ENCODE measurements at regions of chr16 and their contacts with region 1.

Region 1: DNA sequence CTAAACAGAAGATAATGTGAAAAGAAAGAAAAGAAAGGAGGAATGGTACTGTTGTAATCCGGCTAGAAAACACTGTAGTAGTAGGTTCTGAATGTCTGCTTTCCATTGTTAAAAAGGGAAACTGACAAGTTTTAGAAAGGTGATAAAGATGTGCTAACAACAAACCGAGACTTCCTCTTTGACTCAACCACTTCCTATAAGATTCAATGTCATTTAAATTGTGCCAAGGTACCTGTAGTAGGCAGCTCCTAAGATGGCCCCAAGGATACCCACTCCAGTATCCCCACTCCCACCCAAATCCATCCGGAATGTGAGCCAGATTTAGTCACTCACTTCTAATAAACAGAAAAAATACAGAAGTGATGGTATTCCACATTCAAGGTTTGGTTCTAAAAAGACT is 31.2 kb downstream of the XYLT1 start:
- DNase-seq: no peak

Region 2: GRCh38 chr16:17252064-17252463 is 187.5 kb before region 1 on chr16:
- intact Hi-C with region 1: no loop called
- DNase-seq: no peak

Region 3: DNA sequence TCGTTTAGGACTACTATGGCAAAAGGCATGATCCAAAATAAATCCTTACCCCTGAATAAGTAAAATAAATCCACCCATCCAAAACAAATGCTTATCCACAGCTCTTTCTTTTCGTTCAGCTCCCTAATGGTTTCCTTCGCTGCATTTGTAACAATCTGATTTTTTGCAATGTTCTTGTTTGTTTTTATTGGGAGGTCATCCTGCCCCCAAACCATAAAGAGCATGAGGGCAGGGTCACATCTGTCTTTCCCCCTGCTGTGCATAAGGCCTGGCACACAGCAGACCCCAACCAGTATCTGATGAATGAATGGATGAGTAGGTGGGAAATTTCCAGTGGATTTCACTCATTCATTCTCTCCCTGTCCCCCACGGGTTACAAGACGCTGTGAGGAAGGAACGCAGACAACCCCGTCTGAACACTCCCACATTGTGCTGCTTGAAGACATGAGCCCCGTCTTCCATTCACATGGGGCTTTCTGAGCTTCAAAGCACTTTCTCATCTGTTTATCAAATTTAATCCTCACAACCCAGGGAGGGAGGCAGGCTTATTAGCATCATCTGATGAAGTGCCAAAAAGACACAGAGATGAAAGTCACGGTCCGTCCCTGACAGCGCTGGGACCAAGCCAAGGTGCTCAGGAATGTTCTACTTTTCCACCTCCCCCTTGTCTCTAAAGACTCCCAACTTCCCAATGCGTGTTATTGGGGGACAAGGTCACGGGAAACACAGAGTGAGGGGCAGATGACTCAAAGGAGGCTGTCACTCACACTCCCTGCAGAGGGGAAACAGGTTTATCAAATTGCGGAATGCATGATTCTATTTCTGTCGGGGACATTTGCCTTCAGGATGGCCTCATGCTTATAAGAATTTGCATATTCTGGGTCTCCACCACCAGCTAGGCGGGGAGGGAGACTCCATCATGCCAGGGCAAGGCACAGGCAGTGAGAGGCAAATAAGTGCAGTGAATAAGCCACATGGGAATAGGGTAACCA is 20.2 kb after region 1 on chr16:
- intact Hi-C with region 1: loop called (anchors 2 kb)
- DNase-seq: no peak

Region 4: GRCh38 chr16:17511340-17511739 is 71.8 kb after region 1 on chr16:
- intact Hi-C with region 1: no loop called
- DNase-seq: no peak

Region 5: DNA sequence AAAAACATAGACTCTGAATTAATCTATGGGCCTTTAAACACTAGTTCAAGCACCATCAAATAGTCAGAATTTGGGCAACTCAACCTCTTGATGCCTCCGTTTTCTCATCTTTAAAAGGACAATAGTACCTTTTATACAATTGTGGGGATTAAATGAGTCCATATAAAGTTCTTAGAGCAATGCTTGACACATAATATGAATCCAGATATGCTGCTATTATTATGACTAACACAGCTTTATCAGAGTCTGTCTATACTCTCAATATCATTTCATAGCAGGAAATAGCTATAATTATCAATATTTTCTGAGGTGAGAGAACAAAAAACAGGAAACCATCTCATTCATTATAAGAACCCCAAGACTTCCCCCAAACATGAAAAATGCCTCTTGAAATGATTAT is 461.7 kb after region 1 on chr16:
- intact Hi-C with region 1: no loop called
- DNase-seq: no peak

Measured in cardiac septum (tissue), 1 donor.